ENCODE measurements at regions of chr3 and their contacts with region 1.

Region 1: GRCh38 chr3:189967254-189967865 is 153.3 kb downstream of the P3H2 start:
- DNase-seq: peak in 2 of 4 donors; percentile 20 to 33
- ATAC-seq: peak; percentile 59
- H3K4me3 ChIP-seq: no peak overlapping the region
- H3K27ac ChIP-seq: no peak overlapping the region
- H3K4me1 ChIP-seq: no peaks in the 10 kb centered on the region
- H3K27me3 ChIP-seq: no peaks in the 10 kb centered on the region
- CTCF ChIP-seq: peak; percentile 47 to 91 (median 83)
- POLR2A ChIP-seq: no peak

Region 2: DNA sequence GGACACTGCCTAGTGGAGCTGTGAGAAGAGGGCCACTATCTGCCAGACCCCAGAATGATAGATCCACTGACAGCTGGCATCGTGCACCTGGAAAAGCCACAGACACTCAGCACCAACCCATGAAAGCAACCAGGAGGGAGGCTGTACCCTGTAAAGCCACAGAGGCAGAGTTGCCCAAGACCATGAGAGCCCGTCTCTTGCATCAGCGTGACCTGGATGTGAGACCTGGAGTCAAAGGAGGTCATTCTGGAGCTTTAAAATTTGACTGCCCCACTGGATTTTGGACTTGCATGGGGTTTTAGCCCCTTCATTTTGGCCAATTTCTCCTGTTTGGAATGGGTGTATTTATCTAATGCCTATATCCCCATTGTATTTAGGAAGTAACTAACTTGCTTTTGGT is 236.8 kb after region 1 on chr3:
- intact Hi-C with region 1: loop called (anchors 5 kb)
- DNase-seq: no peak
- ATAC-seq: no peak
- H3K4me3 ChIP-seq: no peak overlapping the region
- H3K27ac ChIP-seq: no peak overlapping the region
- H3K4me1 ChIP-seq: no peaks in the 10 kb centered on the region
- H3K27me3 ChIP-seq: no peaks in the 10 kb centered on the region
- CTCF ChIP-seq: no peak
- POLR2A ChIP-seq: no peak